Dorsolateral prefrontal cortex (tissue), 120 donors: ENCODE measurements at regions of chr10 and their contacts with region 1.

Region 1: GRCh38 chr10:104121520-104122224 is at the start of gene SFR1:
- DNase-seq: peak; percentile 96 to 99 (median 98)
- H3K4me3 ChIP-seq: peak within 1 kb of the TSS; percentile 64 to 95 (median 80)
- H3K27ac ChIP-seq: peak within 1 kb of the TSS; percentile 87 to 99 (median 98)
- H3K27me3 ChIP-seq: no peaks in the 10 kb centered on the region
- CTCF ChIP-seq: peak; percentile 52 to 86 (median 74)
- total RNA-seq, gene SFR1: 3.1 to 19.2 (median 7.6) TPM

Region 2: GRCh38 chr10:103712570-103713498 is 408.8 kb before region 1 on chr10:
- intact Hi-C with region 1: loop called in 1 of 2 experiments (anchors 10 kb)
- DNase-seq: peak; percentile 85 to 99 (median 88)
- H3K4me3 ChIP-seq: no peak overlapping the region
- H3K27ac ChIP-seq: peak overlapping the region in 54 of 59 donors; percentile 2 to 99 (median 93)
- H3K27me3 ChIP-seq: no peaks in the 10 kb centered on the region
- CTCF ChIP-seq: peak; percentile 85 to 99 (median 96)

Region 3: DNA sequence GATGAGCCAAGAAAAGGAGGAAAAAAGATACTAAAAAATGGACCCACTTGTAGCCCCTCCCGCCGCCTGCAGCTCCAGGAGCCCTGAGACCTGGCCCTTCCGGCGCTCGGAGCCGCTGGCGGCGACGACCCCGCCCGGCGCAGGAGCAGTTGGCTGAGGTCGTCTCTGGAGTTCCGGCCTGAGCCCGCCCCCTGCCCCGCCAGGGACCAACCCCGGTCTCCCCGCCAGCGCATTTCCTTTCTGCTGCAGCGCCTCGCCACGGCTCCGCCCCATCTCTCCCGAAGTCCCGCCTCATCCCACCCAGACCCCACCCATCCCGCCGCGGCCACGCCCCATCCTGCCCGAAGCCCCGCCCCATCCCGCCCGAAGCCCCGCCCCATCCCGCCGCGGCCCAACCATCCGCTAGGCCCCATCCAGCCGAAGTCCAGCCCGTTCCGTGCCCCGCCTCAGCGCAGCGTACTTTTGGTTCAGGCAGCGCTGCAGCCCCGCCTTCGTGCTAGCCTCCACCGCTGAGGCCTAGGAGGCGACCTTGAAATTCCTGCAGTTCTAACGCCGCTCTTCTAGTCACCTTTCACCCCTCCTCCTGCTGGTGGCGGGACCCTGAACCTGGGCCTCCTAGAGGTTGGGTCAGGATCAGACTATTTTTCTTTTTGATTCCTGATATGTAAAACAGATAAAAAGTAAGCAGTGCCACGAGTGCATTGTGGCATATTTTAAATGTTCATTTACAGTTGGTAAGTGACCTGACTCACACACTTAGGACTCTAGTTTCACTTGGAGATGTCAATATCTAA is 203.4 kb before region 1 on chr10 and contains the start of gene STN1:
- intact Hi-C with region 1: loop called (anchors 5 to 10 kb)
- DNase-seq: peak; percentile 93 to 98 (median 97)
- H3K4me3 ChIP-seq: peak within 1 kb of the TSS; percentile 60 to 98 (median 81)
- H3K27ac ChIP-seq: peak within 1 kb of the TSS; percentile 79 to 98 (median 94)
- H3K27me3 ChIP-seq: no peaks in the 10 kb centered on the region
- CTCF ChIP-seq: peak in 32 of 56 donors; percentile 2 to 57 (median 28)
- total RNA-seq, gene STN1: 7.9 to 24.9 (median 15.5) TPM

Region 4: GRCh38 chr10:104034401-104035193 is 87.1 kb before region 1 on chr10:
- intact Hi-C with region 1: loop called in 1 of 2 experiments (anchors 2 kb)
- DNase-seq: no peak
- H3K4me3 ChIP-seq: no peak overlapping the region
- H3K27ac ChIP-seq: peak overlapping the region in 51 of 59 donors; percentile 18 to 93 (median 77)
- H3K27me3 ChIP-seq: no peaks in the 10 kb centered on the region
- CTCF ChIP-seq: no peak

Region 5: GRCh38 chr10:104081998-104082397 is 39.7 kb before region 1 on chr10:
- intact Hi-C with region 1: loop called in 1 of 2 experiments (anchors 2 kb)
- DNase-seq: no peak
- H3K4me3 ChIP-seq: no peak overlapping the region
- H3K27ac ChIP-seq: no peak overlapping the region
- H3K27me3 ChIP-seq: no peaks in the 10 kb centered on the region
- CTCF ChIP-seq: no peak

Region 6: DNA sequence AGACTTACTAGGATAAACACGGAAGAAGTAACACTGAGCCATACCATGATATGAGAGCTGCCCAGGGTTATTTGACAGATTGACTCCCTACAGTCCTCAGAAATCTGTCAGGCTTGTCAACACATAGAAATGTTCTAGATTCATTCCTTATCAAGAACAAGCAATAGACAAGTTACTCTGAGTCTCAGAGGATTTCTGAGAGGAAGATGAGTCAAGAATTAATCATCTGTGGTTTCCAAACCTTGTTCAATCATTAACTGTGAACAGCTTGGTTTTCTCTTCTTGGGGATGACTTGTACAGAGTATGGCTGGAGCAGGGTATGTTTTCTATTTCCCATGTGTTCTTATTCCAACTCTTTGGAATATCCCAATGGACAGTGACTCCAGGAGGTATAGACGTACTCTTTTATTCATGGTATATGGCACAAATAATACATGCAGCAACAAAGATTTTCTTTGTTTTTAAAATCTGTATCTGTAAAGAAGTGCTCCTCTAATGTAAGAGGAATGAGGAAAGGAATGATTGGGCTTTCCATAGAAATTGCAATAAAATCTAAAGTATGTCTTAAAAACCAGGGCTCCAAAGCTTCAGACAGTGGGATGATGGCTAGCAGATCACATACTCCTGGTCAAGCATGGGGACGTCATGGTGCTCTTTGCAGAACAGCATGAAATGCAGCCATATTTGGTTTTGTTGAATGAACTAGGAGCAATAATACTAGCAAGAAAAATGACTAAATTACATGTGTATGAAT is 11.6 kb before region 1 on chr10:
- intact Hi-C with region 1: no loop called
- DNase-seq: no peak
- H3K4me3 ChIP-seq: no peak overlapping the region
- H3K27ac ChIP-seq: no peak overlapping the region
- H3K27me3 ChIP-seq: peaks cover 0 to 3% (median 0%) of the 10 kb centered on the region in 45 donors
- CTCF ChIP-seq: no peak